Activated T-helper 2 cell treated with anti-CD3 and anti-CD28 coated beads, Interferon-gamma antibody, Interleukin-2, Interleukin-4, amounts not matched to agents 10 μg/mL and 5 μg/mL and 100 μg/mL, durations not matched to agents 14 hours and 24 hours and 36 hours (primary cell): ENCODE measurements at regions of chr16 and their contacts with region 1.

Region 1: DNA sequence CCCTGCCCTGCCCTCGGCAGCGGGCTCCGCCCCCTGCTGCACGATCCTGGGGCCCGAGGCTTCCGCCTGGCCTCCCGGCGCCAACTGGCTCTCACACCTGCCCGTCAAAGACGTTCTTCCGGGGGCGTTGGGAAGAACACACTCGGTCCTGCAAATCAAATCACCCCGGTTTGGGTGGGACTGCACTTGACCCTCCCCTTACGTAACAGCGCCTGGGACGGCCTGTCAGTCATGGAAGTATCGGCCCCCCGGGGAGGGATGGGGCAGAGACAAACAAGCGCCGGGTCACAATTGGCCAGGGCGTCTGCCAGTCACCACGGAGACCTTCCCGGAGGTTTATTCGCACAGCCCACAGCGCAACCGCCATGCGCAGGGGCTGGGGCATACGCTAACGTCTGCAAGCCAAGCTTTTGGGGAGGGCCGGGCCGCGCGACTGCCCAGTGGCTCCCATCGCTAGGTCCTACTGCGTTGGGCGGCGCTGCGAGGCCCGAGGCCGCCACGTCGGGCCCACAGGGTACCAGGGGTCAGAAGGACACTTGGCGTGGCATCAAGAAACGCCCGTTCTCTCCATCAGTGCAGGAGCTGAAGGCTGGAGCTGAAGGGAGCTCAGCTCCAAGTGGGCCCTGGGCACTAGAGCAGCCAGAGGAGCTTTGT is 388 bp upstream of the AKTIP start:
- DNase-seq: peak; percentile 100
- H3K4me3 Mint-ChIP-seq: peak overlapping the region; percentile 88
- H3K27ac Mint-ChIP-seq: peak overlapping the region; percentile 91
- H3K4me1 Mint-ChIP-seq: peaks cover 45% of the 10 kb centered on the region
- H3K27me3 Mint-ChIP-seq: no peaks in the 10 kb centered on the region

Region 2: DNA sequence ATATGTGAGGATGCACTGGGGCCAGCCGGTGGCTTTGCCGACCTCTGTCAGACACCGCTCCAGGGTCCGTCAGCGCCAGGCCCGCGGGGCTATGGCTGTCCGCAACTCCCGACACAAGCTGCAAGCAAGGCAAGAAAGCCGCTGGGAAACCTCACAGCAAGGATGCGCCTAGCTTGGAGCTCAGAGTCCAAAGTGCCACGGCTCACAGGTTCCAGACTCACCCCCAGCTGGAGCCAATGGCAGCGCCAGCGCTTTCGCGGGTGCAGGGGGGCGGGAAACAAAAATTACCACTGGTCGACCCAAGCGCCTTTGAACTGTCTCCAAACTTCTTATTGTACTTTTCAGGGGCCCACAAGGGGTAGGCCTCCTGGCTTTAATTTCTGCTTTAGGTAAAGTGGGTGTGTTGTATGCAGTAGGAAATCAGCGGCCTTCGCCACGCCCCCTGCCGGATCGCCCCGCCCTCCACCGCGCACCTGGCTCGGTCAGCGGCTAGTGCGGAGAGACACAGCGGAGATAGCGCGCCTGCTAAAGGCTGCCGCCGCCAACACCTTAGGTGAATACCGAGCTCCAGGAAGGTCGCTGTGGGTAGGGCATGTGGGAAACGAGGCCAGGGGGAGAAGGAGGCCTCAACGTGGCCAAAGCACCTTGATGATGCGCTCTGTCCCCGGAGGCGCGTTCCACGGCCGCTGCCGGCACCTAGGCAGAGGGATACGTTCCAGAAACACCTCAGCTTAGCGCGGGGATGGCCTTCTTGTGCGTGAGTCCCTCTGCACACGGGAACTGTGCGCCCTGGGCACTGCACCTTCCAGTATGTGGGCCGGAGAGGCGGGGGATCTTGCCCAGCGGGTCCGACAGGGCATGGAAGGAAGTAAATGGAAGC is 130.2 kb before region 1 on chr16:
- intact Hi-C with region 1: loop called (anchors 5 kb)
- DNase-seq: peak; percentile 65
- H3K4me3 Mint-ChIP-seq: peak overlapping the region; percentile 78
- H3K27ac Mint-ChIP-seq: no peak overlapping the region
- H3K4me1 Mint-ChIP-seq: peaks cover 14% of the 10 kb centered on the region
- H3K27me3 Mint-ChIP-seq: peaks cover 26% of the 10 kb centered on the region

Region 3: DNA sequence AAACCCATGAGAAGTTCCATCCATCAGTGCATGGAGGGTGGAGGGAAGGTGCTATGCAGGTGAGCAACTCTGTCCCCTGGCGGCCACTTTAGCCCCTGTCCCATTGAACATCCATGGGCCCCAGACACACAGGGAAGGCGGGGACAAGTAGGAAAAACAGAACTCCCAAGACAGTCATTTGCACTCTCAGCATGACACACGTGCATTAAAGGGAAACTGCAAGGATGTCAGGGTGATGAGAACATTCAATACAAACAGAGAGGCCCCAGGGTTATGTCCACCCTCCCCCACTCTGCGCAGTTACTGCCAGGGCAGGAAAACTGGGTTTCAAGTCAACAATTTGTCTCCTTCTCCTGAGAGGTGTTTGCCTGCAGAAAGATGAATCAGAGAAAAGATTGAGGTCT is 43.6 kb after region 1 on chr16:
- intact Hi-C with region 1: no loop called
- DNase-seq: no peak
- H3K4me3 Mint-ChIP-seq: no peak overlapping the region
- H3K27ac Mint-ChIP-seq: no peak overlapping the region
- H3K4me1 Mint-ChIP-seq: peaks cover 44% of the 10 kb centered on the region
- H3K27me3 Mint-ChIP-seq: peaks cover 25% of the 10 kb centered on the region

Region 4: GRCh38 chr16:53872248-53873221 is 369.1 kb after region 1 on chr16:
- intact Hi-C with region 1: no loop called
- DNase-seq: no peak
- H3K4me3 Mint-ChIP-seq: peak overlapping the region; percentile 11
- H3K27ac Mint-ChIP-seq: peak overlapping the region; percentile 82
- H3K4me1 Mint-ChIP-seq: peaks cover 26% of the 10 kb centered on the region
- H3K27me3 Mint-ChIP-seq: no peaks in the 10 kb centered on the region